ENCODE measurements at regions of chr6 and their contacts with region 1.

Region 1: GRCh38 chr6:23494367-23494766 is 631.6 kb upstream of the NRSN1 start:
- DNase-seq: no peak
- H3K4me3 ChIP-seq: no peak overlapping the region
- H3K27ac ChIP-seq: no peak overlapping the region
- H3K4me1 ChIP-seq: no peaks in the 10 kb centered on the region
- H3K27me3 ChIP-seq: no peaks in the 10 kb centered on the region
- CTCF ChIP-seq: no peak
- POLR2A ChIP-seq: no peak

Region 2: GRCh38 chr6:22668307-22668706 is 826.1 kb before region 1 on chr6:
- intact Hi-C with region 1: loop called (anchors 5 kb)
- DNase-seq: no peak
- H3K4me3 ChIP-seq: no peak overlapping the region
- H3K27ac ChIP-seq: peak overlapping the region; percentile 41 to 55
- H3K4me1 ChIP-seq: no peaks in the 10 kb centered on the region
- H3K27me3 ChIP-seq: no peaks in the 10 kb centered on the region
- CTCF ChIP-seq: no peak
- POLR2A ChIP-seq: no peak

Region 3: DNA sequence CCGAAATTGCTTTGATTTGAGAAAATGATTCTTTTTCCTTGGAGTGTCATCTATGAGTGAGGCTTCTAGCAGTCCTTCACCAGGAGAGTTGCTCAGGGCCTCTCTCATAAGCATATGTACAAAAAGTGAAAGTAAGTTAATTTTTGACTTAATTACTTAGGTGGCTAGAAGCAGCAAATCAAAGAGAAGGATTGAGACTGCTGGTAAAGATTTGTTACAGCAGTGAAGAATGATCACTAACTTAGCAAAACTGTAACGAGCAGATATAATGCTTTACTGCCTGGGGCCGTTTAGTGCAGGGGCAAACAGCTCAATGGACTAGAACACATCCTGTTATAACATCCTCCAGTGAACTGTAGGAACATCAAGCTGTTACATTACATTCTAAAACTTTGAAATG is 1609.2 kb after region 1 on chr6:
- intact Hi-C with region 1: no loop called
- DNase-seq: no peak
- H3K4me3 ChIP-seq: no peak overlapping the region
- H3K27ac ChIP-seq: no peak overlapping the region
- H3K4me1 ChIP-seq: no peaks in the 10 kb centered on the region
- H3K27me3 ChIP-seq: no peaks in the 10 kb centered on the region
- CTCF ChIP-seq: no peak
- POLR2A ChIP-seq: no peak